Keratinocyte (primary cell): ENCODE measurements at regions of chr11 and their contacts with region 1.

Region 1: GRCh38 chr11:66677599-66678375 is at the start of gene RBM4B:
- DNase-seq: peak; percentile 72
- H3K4me3 ChIP-seq: peak within 1 kb of the TSS; percentile 67 to 79 (median 75)
- H3K27ac ChIP-seq: peak within 1 kb of the TSS; percentile 94
- H3K4me1 ChIP-seq: peaks cover 24% of the 10 kb centered on the region
- H3K27me3 ChIP-seq: no peaks in the 10 kb centered on the region
- CTCF ChIP-seq: no peak
- polyA plus RNA-seq, gene RBM4B: 17.2 to 20.9 TPM (median 17.9 TPM) in 3 replicates

Region 2: DNA sequence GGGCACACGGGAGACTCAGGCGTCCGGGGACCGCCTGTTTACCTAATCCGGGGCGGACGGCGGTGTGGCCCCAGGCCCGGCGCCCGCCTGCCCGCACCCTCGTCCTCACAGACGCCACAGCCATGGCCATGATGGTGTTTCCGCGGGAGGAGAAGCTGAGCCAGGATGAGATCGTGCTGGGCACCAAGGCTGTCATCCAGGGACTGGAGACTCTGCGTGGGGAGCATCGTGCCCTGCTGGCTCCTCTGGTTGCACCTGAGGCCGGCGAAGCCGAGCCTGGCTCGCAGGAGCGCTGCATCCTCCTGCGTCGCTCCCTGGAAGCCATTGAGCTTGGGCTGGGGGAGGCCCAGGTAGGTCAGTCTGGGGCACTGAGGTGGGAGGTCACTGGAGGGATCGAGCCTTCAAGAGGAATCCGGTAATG is 419.3 kb before region 1 on chr11:
- dilution Hi-C with region 1: no loop called
- DNase-seq: no peak
- H3K4me3 ChIP-seq: peak overlapping the region; percentile 69 to 89 (median 87)
- H3K27ac ChIP-seq: peak overlapping the region; percentile 61
- H3K4me1 ChIP-seq: peaks cover 13% of the 10 kb centered on the region
- H3K27me3 ChIP-seq: no peaks in the 10 kb centered on the region
- CTCF ChIP-seq: peak in 1 of 3 experiments; percentile 23

Region 3: DNA sequence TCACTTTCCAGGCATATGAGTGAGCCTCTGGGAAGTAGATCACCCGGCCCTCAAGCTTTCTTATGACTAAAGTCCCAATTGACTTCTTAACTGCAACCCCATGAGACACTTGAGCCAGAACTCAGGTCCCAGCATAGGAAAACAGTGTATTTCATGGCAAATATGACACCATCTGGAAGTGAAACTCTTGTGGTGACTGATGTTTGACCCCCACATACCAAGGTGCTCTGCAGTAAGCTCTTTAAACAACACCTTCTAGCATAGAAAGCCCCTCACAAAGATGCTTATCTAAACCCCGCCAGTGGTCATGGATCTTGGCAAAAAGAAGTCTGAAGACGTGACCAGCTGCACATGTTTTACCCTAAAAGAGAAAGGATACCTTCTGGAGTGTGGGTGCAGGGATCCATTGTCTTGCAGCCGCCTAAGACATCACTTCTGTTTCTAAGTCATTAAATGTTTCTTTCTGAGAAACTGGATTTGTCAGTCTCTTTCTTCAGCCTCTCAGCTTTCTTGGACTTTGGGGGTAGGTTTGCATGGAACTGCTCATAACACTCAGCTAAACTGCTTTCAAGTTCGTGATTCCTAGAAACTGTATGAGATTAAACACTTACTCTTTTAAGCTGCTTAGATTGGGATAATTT is 218.5 kb before region 1 on chr11:
- dilution Hi-C with region 1: no loop called
- DNase-seq: no peak
- H3K4me3 ChIP-seq: no peak overlapping the region
- H3K27ac ChIP-seq: no peak overlapping the region
- H3K4me1 ChIP-seq: peaks cover 10% of the 10 kb centered on the region
- H3K27me3 ChIP-seq: no peaks in the 10 kb centered on the region
- CTCF ChIP-seq: no peak

Region 4: DNA sequence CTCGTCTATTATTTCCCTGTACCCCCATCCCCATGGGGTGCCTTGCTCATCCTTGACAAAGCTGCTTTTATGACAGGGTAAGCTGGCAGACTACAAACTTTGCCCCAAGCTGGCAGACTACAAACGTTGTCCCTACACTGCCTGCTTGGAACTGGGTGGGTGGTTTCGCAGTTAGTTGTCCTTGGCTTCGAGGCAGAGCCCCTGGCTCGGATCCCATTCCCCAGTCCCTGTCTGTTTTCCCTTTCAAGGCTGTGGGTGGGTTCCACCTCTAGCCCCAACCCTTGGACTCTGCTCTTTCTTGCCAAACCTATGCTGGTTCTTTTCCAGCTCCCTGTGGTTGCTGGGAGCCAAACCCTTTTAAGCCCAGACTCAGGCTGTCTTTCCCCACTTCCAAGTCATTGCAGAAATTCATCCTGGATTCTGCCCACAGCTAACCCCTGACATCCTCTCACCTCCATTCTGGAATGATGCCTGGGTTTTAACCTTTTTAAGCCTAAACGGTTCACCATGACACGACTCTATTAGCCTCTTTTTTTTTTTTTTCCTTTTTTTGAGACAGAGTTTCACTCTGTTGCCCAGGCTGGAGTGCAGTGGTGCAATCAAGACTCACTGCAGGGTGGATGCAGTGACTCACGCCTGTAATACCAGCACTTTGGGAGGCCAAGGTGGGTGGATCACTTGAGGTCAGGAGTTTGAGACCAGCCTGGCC is 70.5 kb before region 1 on chr11:
- dilution Hi-C with region 1: no loop called
- DNase-seq: no peak
- H3K4me3 ChIP-seq: no peak overlapping the region
- H3K27ac ChIP-seq: peak overlapping the region; percentile 70
- H3K4me1 ChIP-seq: peaks cover 10% of the 10 kb centered on the region
- H3K27me3 ChIP-seq: no peaks in the 10 kb centered on the region
- CTCF ChIP-seq: no peak

Region 5: DNA sequence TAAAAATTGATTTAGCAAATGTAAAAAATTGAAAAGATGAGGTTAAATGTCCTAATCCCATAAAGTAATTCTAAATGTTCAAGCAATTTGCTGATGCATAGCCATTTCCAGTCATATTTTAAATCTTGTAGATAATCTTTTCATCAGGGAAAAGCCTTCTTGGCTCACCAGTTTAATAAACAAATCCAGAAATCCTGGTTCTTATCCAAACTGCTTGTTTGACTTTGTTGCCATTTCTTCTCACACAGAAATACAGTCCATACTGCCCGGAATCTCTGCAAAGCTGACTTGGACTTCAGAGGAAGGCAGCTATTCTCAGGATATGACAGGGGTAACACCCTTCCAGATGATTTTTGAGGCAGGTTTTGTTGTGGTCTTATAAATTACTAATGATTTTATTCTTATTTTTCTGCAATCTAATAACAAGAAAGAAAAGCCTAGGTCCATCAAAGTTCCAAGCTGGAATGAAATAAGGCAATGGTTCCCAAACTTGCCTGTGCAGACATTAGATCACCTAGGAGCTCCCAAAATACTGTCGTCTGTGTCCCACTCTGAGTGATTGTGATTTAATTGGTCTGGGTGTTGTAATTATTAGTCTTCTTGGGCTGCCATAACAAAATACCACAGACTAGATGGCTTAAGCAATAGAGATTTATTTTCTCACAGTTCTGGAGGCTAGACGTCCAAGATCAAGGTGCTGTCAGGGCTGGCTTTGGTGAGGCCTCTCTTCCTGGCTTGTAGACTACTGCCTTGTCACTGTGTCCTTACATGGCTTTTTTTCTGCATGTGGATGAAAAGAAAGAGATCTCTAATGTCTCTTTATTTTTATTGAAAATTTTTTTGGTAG is 110.3 kb after region 1 on chr11:
- dilution Hi-C with region 1: loop called (anchors 25 kb)
- DNase-seq: no peak
- H3K4me3 ChIP-seq: no peak overlapping the region
- H3K27ac ChIP-seq: no peak overlapping the region
- H3K4me1 ChIP-seq: no peaks in the 10 kb centered on the region
- H3K27me3 ChIP-seq: no peaks in the 10 kb centered on the region
- CTCF ChIP-seq: no peak

Region 6: DNA sequence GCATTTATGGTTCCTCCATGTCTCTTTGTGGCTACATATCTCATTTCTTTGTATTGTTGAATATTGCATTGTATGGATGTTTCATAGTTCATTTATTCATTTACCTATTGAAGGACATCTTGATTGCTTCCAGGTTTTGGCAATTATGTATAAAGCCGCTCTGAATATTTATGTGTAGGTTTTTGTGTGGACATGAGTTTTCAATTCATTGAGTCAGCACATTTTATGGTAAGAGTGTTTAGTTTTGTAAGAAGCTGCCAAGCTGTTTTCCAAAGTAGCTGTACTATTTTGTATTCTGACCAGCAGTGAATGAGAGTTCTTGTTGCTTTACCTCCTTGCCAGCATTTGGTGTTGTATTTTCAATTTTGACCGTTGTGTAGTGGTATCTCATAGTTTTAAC is 480.4 kb after region 1 on chr11:
- dilution Hi-C with region 1: no loop called
- DNase-seq: no peak
- H3K4me3 ChIP-seq: no peak overlapping the region
- H3K27ac ChIP-seq: no peak overlapping the region
- H3K4me1 ChIP-seq: peaks cover 4% of the 10 kb centered on the region
- H3K27me3 ChIP-seq: no peaks in the 10 kb centered on the region
- CTCF ChIP-seq: no peak